ENCODE measurements at regions of chr4 and their contacts with region 1.

Region 1: DNA sequence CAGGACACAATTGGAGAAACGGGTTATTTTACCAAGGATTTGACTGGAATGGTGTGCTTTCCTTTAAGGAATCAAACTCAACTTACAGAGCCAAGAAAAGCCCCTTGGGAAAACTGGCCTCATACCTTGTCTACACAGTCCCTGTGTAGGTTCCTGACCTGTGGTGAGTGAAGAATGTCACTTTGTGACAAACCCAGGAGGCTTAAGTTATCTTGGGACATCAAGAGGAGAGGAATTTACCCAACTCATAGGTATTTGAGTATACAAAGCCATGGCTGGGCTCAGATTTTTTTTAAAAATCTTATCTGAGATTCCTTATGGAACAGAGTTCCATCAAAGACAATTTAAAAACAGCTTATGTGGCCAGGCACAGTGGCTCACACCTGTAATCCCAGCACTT is 112.1 kb downstream of the EIF4E start:
- DNase-seq: peak; percentile 81 to 84
- H3K4me3 ChIP-seq: no peak overlapping the region
- H3K4me3 Mint-ChIP-seq: no peak overlapping the region
- H3K27ac Mint-ChIP-seq: peak overlapping the region; percentile 94
- H3K4me1 ChIP-seq: peaks cover 42% of the 10 kb centered on the region
- H3K4me1 Mint-ChIP-seq: peaks cover 39% of the 10 kb centered on the region
- H3K27me3 ChIP-seq: no peaks in the 10 kb centered on the region
- H3K27me3 Mint-ChIP-seq: no peaks in the 10 kb centered on the region
- CTCF ChIP-seq: no peak

Region 2: GRCh38 chr4:98778206-98778605 is 38.6 kb before region 1 on chr4:
- CTCF ChIA-PET with region 1: no interaction called
- POLR2A ChIA-PET with region 1: interaction called, 3 read pairs
- intact Hi-C with region 1: loop called (anchors 1 kb)
- DNase-seq: peak in 1 of 2 experiments; percentile 49
- H3K4me3 ChIP-seq: no peak overlapping the region
- H3K4me3 Mint-ChIP-seq: no peak overlapping the region
- H3K27ac Mint-ChIP-seq: peak overlapping the region; percentile 69
- H3K4me1 ChIP-seq: peaks cover 47% of the 10 kb centered on the region
- H3K4me1 Mint-ChIP-seq: peaks cover 44% of the 10 kb centered on the region
- H3K27me3 ChIP-seq: no peaks in the 10 kb centered on the region
- H3K27me3 Mint-ChIP-seq: no peaks in the 10 kb centered on the region
- CTCF ChIP-seq: no peak

Region 3: GRCh38 chr4:98873059-98873458 is 56.2 kb after region 1 on chr4:
- CTCF ChIA-PET with region 1: no interaction called
- POLR2A ChIA-PET with region 1: no interaction called
- intact Hi-C with region 1: no loop called
- DNase-seq: no peak
- H3K4me3 ChIP-seq: no peak overlapping the region
- H3K4me3 Mint-ChIP-seq: no peak overlapping the region
- H3K27ac Mint-ChIP-seq: no peak overlapping the region
- H3K4me1 ChIP-seq: no peaks in the 10 kb centered on the region
- H3K4me1 Mint-ChIP-seq: peaks cover 7% of the 10 kb centered on the region
- H3K27me3 ChIP-seq: no peaks in the 10 kb centered on the region
- H3K27me3 Mint-ChIP-seq: no peaks in the 10 kb centered on the region
- CTCF ChIP-seq: no peak

Region 4: GRCh38 chr4:99447079-99447478 is 630.3 kb after region 1 on chr4:
- CTCF ChIA-PET with region 1: no interaction called
- POLR2A ChIA-PET with region 1: no interaction called
- intact Hi-C with region 1: no loop called
- DNase-seq: no peak
- H3K4me3 ChIP-seq: no peak overlapping the region
- H3K4me3 Mint-ChIP-seq: no peak overlapping the region
- H3K27ac Mint-ChIP-seq: no peak overlapping the region
- H3K4me1 ChIP-seq: no peaks in the 10 kb centered on the region
- H3K4me1 Mint-ChIP-seq: no peaks in the 10 kb centered on the region
- H3K27me3 ChIP-seq: no peaks in the 10 kb centered on the region
- H3K27me3 Mint-ChIP-seq: no peaks in the 10 kb centered on the region
- CTCF ChIP-seq: no peak